ENCODE measurements at regions of chr6 and their contacts with region 1.

Region 1: GRCh38 chr6:37819177-37819823 is at the start of gene ZFAND3:
- DNase-seq: peak; percentile 83 to 97 (median 92)
- ATAC-seq: peak; percentile 81
- H3K4me3 ChIP-seq: peak within 1 kb of the TSS; percentile 73 to 92
- H3K4me3 Mint-ChIP-seq: peak within 1 kb of the TSS; percentile 96
- H3K27ac ChIP-seq: peak within 1 kb of the TSS; percentile 93 to 98
- H3K27ac Mint-ChIP-seq: peak within 1 kb of the TSS; percentile 98
- H3K4me1 ChIP-seq: peaks cover 39% of the 10 kb centered on the region
- H3K4me1 Mint-ChIP-seq: peaks cover 59% of the 10 kb centered on the region
- H3K27me3 ChIP-seq: no peaks in the 10 kb centered on the region
- H3K27me3 Mint-ChIP-seq: no peaks in the 10 kb centered on the region
- CTCF ChIP-seq: no peak
- total RNA-seq, gene ZFAND3: 28.4 to 29.9 TPM

Region 2: GRCh38 chr6:36985808-36986703 is 833.2 kb before region 1 on chr6 and contains the start of gene MTCH1:
- CTCF ChIA-PET with region 1: no interaction called
- POLR2A ChIA-PET with region 1: no interaction called
- intact Hi-C with region 1: loop called in 1 of 2 experiments (anchors 10 kb)
- DNase-seq: peak; percentile 74 to 95 (median 87)
- ATAC-seq: peak; percentile 82
- H3K4me3 ChIP-seq: peak within 1 kb of the TSS; percentile 97
- H3K4me3 Mint-ChIP-seq: no peak within 1 kb of the TSS
- H3K27ac ChIP-seq: peak within 1 kb of the TSS; percentile 83 to 85
- H3K27ac Mint-ChIP-seq: peak within 1 kb of the TSS; percentile 98
- H3K4me1 ChIP-seq: peaks cover 41% of the 10 kb centered on the region
- H3K4me1 Mint-ChIP-seq: peaks cover 20% of the 10 kb centered on the region
- H3K27me3 ChIP-seq: no peaks in the 10 kb centered on the region
- H3K27me3 Mint-ChIP-seq: no peaks in the 10 kb centered on the region
- CTCF ChIP-seq: no peak
- total RNA-seq, gene MTCH1: 267 to 269 TPM

Region 3: GRCh38 chr6:37653933-37654565 is 165.3 kb before region 1 on chr6:
- CTCF ChIA-PET with region 1: no interaction called
- POLR2A ChIA-PET with region 1: no interaction called
- intact Hi-C with region 1: no loop called
- DNase-seq: peak in 6 of 9 experiments; percentile 16 to 64 (median 51)
- ATAC-seq: no peak
- H3K4me3 ChIP-seq: no peak overlapping the region
- H3K4me3 Mint-ChIP-seq: no peak overlapping the region
- H3K27ac ChIP-seq: no peak overlapping the region
- H3K27ac Mint-ChIP-seq: no peak overlapping the region
- H3K4me1 ChIP-seq: peaks cover 2% of the 10 kb centered on the region
- H3K4me1 Mint-ChIP-seq: peaks cover 6% of the 10 kb centered on the region
- H3K27me3 ChIP-seq: no peaks in the 10 kb centered on the region
- H3K27me3 Mint-ChIP-seq: peaks cover 8% of the 10 kb centered on the region
- CTCF ChIP-seq: peak; percentile 57

Region 4: DNA sequence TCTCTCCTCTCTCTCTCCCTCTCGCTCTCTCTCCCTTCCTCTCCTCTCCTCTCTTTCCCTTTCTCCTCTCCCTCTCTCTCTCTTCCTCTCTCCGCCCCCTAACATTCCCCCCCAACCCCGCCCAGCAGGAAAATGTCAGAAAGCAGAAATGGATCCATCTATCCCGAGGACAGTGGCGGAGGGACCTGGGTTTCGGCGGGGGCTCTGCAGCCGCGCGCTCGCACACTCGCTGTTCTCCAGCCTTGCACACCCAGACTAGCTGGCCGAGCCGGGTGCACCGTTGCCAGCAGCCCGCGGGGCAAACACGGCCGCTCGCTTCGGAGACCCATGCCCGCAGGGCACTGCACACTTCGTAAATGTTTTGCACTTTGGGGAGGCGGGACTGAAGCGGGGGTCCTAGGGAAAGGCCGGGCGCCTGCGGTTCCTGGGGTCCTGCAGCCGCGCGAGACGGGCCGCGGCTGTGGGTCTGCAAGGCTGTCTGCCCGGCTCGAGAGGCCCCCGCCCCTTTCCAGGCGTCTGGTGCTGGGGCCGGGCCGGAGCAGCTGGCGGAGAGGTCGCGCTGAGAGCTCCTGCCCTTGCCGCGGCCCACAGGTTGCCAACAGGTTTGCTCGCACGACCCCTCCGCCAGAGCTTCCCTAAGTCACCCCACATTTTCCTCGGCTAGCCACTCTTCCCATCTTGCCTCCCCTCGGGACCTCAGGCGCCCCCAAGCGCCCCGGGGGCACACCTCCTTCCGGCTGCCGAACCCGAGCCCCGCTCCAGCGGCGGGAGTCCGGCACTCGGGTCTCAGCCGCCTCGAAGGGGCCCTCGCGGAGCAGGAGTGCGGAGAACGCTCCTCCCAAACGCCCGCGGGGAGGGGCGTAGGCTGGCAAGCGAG is 120.8 kb before region 1 on chr6:
- CTCF ChIA-PET with region 1: no interaction called
- POLR2A ChIA-PET with region 1: interaction called, 7 read pairs
- intact Hi-C with region 1: loop called (anchors 2 to 5 kb)
- DNase-seq: peak; percentile 31 to 86 (median 67)
- ATAC-seq: peak; percentile 29
- H3K4me3 ChIP-seq: peak overlapping the region; percentile 80 to 84
- H3K4me3 Mint-ChIP-seq: peak overlapping the region; percentile 99
- H3K27ac ChIP-seq: peak overlapping the region in 1 of 2 experiments; percentile 85
- H3K27ac Mint-ChIP-seq: peak overlapping the region; percentile 97
- H3K4me1 ChIP-seq: peaks cover 11% of the 10 kb centered on the region
- H3K4me1 Mint-ChIP-seq: peaks cover 18% of the 10 kb centered on the region
- H3K27me3 ChIP-seq: peaks cover 9 to 25% of the 10 kb centered on the region in 2 experiments
- H3K27me3 Mint-ChIP-seq: peaks cover 31% of the 10 kb centered on the region
- CTCF ChIP-seq: no peak

Region 5: DNA sequence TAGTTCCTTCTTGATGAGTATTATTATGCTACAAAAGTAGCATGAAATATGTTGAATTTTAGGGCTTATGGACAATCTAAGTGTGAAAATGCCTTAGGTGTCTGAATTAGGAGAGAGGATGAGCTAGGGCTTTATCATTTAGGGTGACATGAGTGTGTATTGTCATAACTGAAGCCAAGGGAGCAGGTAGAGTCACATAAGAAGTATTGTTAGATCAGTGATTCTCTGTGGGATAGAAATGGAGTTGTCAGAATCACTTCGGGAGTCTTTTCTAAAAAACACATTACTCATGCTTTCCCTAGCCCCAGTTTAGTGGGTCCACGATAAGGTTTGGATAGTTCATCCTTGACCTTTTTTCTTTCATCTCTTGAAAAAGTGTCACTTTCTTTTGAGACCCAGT is 16.6 kb after region 1 on chr6:
- CTCF ChIA-PET with region 1: no interaction called
- POLR2A ChIA-PET with region 1: no interaction called
- intact Hi-C with region 1: loop called in 1 of 2 experiments (anchors 2 kb)
- DNase-seq: no peak
- ATAC-seq: no peak
- H3K4me3 ChIP-seq: no peak overlapping the region
- H3K4me3 Mint-ChIP-seq: no peak overlapping the region
- H3K27ac ChIP-seq: no peak overlapping the region
- H3K27ac Mint-ChIP-seq: peak overlapping the region; percentile 53
- H3K4me1 ChIP-seq: peaks cover 9% of the 10 kb centered on the region
- H3K4me1 Mint-ChIP-seq: peaks cover 54% of the 10 kb centered on the region
- H3K27me3 ChIP-seq: no peaks in the 10 kb centered on the region
- H3K27me3 Mint-ChIP-seq: no peaks in the 10 kb centered on the region
- CTCF ChIP-seq: no peak

Region 6: GRCh38 chr6:38570750-38571149 is 751.5 kb after region 1 on chr6:
- CTCF ChIA-PET with region 1: no interaction called
- POLR2A ChIA-PET with region 1: no interaction called
- intact Hi-C with region 1: loop called in 1 of 2 experiments (anchors 10 kb)
- DNase-seq: peak in 2 of 9 experiments; percentile 5 to 18
- ATAC-seq: no peak
- H3K4me3 ChIP-seq: no peak overlapping the region
- H3K4me3 Mint-ChIP-seq: no peak overlapping the region
- H3K27ac ChIP-seq: no peak overlapping the region
- H3K27ac Mint-ChIP-seq: no peak overlapping the region
- H3K4me1 ChIP-seq: peaks cover 7% of the 10 kb centered on the region
- H3K4me1 Mint-ChIP-seq: peaks cover 21% of the 10 kb centered on the region
- H3K27me3 ChIP-seq: no peaks in the 10 kb centered on the region
- H3K27me3 Mint-ChIP-seq: no peaks in the 10 kb centered on the region
- CTCF ChIP-seq: peak; percentile 41